Activated CD4-positive, alpha-beta memory T cell treated with anti-CD3 and anti-CD28 coated beads, Interleukin-2, amount 10 ng/mL, durations not matched to agents 7 days and 5 days (primary cell): ENCODE measurements at regions of chr1 and their contacts with region 1.

Region 1: DNA sequence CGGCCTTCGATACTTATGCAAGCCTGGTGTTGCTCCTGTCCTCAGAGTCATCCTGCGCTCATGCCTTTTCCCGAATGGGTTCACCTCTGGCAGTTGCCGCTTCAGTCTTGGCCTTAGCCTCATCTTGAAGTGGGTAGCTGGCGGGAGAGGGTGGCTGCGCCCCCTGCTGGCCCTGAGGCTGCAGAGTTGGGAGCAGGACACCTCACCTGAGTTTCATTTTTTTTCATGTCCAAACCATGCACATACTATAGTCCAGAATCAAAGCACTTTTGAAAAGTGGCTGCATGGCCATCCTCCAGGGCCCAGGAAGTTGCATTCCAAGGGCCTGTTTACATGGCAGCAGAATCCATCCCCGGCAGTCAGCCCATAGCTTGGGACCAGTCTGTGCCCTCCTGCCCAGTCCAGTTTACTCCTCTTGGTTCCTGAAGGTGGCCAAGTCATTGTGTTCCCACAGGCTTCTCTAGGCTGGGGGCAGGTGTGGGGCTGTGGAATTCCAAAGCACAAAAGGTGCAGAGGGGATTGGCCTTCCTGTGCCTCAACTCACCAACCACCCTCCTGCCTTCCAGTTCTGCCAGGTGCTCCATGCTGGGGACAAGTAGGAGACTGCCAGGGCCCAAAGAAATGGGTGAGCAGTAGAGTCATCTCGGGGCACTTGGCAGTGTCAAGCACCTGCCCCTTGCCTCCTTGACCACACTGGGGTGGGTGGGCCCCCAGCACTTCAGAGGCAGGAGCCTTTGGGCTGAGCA is 44.0 kb downstream of the YARS1 start:
- DNase-seq: peak; percentile 78
- H3K4me3 Mint-ChIP-seq: no peak overlapping the region
- H3K27ac Mint-ChIP-seq: peak overlapping the region; percentile 15
- H3K4me1 Mint-ChIP-seq: peaks cover 15% of the 10 kb centered on the region
- H3K27me3 Mint-ChIP-seq: no peaks in the 10 kb centered on the region

Region 2: GRCh38 chr1:32706491-32706890 is 66.7 kb before region 1 on chr1:
- CTCF ChIA-PET with region 1: interaction called, 157 read pairs
- POLR2A ChIA-PET with region 1: no interaction called
- DNase-seq: no peak
- H3K4me3 Mint-ChIP-seq: no peak overlapping the region
- H3K27ac Mint-ChIP-seq: no peak overlapping the region
- H3K4me1 Mint-ChIP-seq: peaks cover 11% of the 10 kb centered on the region
- H3K27me3 Mint-ChIP-seq: peaks cover 26% of the 10 kb centered on the region

Region 3: DNA sequence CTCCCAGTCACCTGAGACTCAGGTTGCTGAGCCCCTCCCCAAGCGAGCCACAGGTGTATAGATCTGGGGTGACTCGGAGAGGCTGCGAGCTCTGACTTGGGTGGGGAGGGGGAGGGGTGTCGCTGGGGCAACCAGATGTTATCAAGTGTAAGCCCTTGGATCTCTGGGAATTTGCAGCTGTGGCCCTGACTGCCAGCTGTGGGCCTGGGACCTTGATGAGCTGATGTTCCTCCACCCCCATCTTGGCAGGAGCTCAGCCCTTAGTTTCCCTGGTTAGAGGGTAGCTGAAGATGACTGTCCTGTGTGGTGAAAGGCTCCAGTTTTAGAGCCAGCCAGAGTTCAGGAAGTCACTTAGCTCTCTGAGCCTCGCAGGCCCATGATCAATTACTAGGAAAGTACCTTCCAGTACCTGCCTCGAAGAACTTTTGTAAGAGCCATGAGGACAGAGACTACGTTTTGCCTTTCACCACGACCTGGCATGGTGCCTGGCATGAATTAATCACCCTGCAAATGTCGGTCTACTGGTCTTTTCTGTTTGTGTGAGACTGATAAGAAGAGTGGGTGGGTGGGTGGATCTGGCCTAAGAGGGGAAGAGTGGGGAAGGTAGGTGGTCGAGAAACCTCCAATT is 11.8 kb before region 1 on chr1:
- CTCF ChIA-PET with region 1: interaction called, 10 read pairs
- POLR2A ChIA-PET with region 1: interaction called, 3 read pairs
- DNase-seq: no peak
- H3K4me3 Mint-ChIP-seq: no peak overlapping the region
- H3K27ac Mint-ChIP-seq: no peak overlapping the region
- H3K4me1 Mint-ChIP-seq: peaks cover 7% of the 10 kb centered on the region
- H3K27me3 Mint-ChIP-seq: peaks cover 6% of the 10 kb centered on the region

Region 4: DNA sequence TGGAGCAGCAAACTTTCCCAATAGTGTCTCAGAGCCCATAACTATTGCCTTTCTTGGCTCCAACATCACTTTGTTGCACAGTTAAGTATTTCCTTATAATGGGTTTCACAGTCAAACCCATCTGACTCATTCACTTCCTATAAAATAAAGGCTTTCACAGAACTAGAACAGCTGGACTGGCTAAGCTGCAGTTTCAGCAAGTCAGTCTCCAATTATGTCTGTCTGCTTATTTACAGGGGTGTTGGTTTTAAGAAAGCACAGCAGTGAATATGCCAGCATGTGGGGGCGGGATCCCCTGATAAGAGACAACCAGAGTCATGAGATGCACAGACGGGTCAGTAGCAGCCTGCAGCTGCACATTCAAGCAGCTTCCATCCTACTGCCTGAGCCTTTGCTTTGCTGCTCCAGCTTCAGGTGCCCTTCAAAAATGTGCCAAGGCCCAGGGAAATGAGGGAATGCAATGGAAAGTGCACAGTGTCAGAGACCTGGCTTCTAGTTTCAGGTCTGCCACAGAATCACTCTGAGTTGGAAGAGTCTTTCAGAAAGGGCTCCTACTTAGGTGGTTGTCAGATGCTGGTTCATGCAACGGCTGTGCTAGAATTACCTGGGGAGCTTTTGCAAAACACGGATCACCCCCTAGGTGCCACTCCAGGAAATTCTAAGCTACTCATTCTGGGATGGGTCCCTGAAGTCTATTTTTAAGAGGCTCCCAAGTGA is 166.6 kb after region 1 on chr1:
- CTCF ChIA-PET with region 1: no interaction called
- POLR2A ChIA-PET with region 1: no interaction called
- DNase-seq: peak; percentile 30
- H3K4me3 Mint-ChIP-seq: no peak overlapping the region
- H3K27ac Mint-ChIP-seq: peak overlapping the region; percentile 71
- H3K4me1 Mint-ChIP-seq: peaks cover 57% of the 10 kb centered on the region
- H3K27me3 Mint-ChIP-seq: no peaks in the 10 kb centered on the region

Region 5: DNA sequence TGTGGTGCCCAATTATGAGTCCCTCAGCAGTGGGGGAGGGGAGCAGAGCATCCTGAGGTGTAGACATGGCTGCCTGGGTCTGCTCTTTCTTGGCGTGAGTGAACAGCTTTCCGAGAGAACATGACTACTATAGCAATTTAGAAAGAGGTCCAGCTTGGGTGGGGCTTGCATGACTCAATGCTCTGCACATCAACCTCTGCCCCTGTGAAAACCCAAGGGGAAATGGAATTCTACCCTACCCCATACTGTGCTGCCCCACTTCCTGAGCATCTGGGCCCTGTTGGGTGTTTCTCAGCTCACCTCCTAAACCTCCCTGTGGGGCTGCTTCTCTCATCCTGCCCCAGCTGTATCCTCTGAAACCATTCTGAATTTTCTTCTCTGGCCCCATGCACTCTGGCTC is 299.5 kb after region 1 on chr1:
- CTCF ChIA-PET with region 1: no interaction called
- POLR2A ChIA-PET with region 1: no interaction called
- DNase-seq: no peak
- H3K4me3 Mint-ChIP-seq: no peak overlapping the region
- H3K27ac Mint-ChIP-seq: no peak overlapping the region
- H3K4me1 Mint-ChIP-seq: peaks cover 8% of the 10 kb centered on the region
- H3K27me3 Mint-ChIP-seq: peaks cover 21% of the 10 kb centered on the region